ENCODE measurements at regions of chr9 and their contacts with region 1.

Region 1: DNA sequence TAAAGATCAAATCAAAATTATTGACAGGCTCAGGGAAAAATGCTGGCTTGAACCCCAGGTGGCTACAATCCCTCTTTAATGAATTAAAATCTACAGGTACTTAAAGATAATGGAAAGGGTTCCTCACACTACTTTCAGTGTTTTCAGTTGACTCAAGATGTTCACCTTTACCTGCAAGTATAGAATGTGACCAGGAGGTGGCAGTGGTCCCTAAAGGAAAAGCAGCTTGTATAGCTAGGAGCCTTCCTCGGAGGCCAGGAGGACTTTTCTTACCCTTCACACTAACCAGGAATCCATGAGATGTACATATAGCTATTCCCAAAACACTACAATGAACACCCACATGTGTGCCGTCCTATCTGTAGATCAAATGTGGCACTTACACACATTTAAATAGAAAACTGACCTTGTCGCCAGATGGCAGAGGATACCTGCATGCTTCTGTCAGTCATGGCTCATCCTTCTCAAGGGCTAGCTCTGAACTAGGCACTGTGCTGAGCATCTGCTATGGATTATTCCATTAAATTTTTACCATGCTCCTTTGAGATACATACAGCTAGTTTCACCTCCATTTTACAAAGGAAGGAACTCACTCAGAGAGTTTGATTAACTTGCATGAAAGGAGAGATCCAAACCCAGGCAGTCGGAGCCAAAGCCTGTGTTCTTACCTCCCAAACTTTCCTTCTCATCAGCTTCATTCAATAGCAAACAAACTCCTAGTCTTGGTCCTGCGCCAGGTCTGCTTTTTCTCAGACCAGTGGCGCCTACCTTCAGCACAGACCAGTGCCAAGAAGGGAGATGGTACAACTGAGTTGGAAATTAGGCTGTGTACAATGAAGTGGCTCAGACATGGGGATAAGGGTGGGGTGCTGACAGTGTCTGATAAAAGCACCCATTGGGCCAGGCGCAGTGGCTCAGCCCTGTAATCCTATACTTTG is 24.5 kb downstream of the C9orf152 start:
- DNase-seq: peak; percentile 78
- H3K4me3 ChIP-seq: no peak overlapping the region
- H3K27ac ChIP-seq: no peak overlapping the region
- H3K4me1 ChIP-seq: no peaks in the 10 kb centered on the region
- H3K27me3 ChIP-seq: no peaks in the 10 kb centered on the region
- CTCF ChIP-seq: peak; percentile 75

Region 2: GRCh38 chr9:110125207-110125751 is 58.2 kb before region 1 on chr9:
- CTCF ChIA-PET with region 1: no interaction called
- POLR2A ChIA-PET with region 1: no interaction called
- intact Hi-C with region 1: no loop called
- DNase-seq: no peak
- H3K4me3 ChIP-seq: no peak overlapping the region
- H3K27ac ChIP-seq: no peak overlapping the region
- H3K4me1 ChIP-seq: no peaks in the 10 kb centered on the region
- H3K27me3 ChIP-seq: no peaks in the 10 kb centered on the region
- CTCF ChIP-seq: no peak

Region 3: GRCh38 chr9:110217656-110218099 is 34.2 kb after region 1 on chr9:
- CTCF ChIA-PET with region 1: interaction called, 3 read pairs
- POLR2A ChIA-PET with region 1: no interaction called
- intact Hi-C with region 1: loop called (anchors 5 kb)
- DNase-seq: peak; percentile 38
- H3K4me3 ChIP-seq: no peak overlapping the region
- H3K27ac ChIP-seq: no peak overlapping the region
- H3K4me1 ChIP-seq: no peaks in the 10 kb centered on the region
- H3K27me3 ChIP-seq: peaks cover 4% of the 10 kb centered on the region
- CTCF ChIP-seq: peak; percentile 78

Region 4: GRCh38 chr9:110427497-110428104 is 244.1 kb after region 1 on chr9:
- CTCF ChIA-PET with region 1: no interaction called
- POLR2A ChIA-PET with region 1: no interaction called
- intact Hi-C with region 1: loop called (anchors 2 kb)
- DNase-seq: peak; percentile 60
- H3K4me3 ChIP-seq: no peak overlapping the region
- H3K27ac ChIP-seq: no peak overlapping the region
- H3K4me1 ChIP-seq: no peaks in the 10 kb centered on the region
- H3K27me3 ChIP-seq: no peaks in the 10 kb centered on the region
- CTCF ChIP-seq: peak; percentile 88

Region 5: GRCh38 chr9:110623462-110624025 is 440.1 kb after region 1 on chr9:
- CTCF ChIA-PET with region 1: interaction called, 12 read pairs
- POLR2A ChIA-PET with region 1: no interaction called
- intact Hi-C with region 1: loop called (anchors 2 kb)
- DNase-seq: peak; percentile 69
- H3K4me3 ChIP-seq: no peak overlapping the region
- H3K27ac ChIP-seq: no peak overlapping the region
- H3K4me1 ChIP-seq: peaks cover 11% of the 10 kb centered on the region
- H3K27me3 ChIP-seq: no peaks in the 10 kb centered on the region
- CTCF ChIP-seq: peak; percentile 74

Region 6: DNA sequence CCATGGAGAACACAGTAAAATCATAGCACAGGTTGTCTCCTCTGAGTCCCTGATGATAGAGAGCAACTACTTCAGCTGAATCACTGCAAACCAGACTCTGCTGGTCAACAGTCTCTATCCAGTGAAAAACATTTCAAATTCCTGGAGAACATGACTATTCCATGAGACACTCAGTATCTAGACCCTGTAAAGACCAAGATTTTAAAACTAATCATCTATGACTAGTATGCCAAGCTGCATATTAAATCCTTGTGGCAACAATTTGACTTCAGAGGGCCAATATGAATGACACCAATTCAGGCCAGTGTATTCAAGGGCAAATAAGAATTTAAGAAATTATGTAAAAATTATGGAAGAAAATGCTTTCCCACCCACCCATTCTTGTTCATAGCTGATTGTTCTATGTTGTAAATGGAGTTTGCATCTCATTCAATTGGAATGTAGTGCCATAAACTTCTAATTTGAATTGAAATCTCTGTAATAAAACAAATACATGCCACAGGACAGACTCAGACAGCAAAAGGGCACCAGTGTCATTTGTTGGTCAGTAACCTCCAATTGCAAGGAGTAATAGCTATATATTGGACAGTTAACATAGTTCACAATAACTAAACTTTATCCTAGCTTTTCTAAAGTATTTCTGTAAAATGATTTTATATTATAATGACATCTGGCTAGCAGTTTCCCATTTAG is 934.9 kb after region 1 on chr9:
- CTCF ChIA-PET with region 1: no interaction called
- POLR2A ChIA-PET with region 1: no interaction called
- intact Hi-C with region 1: no loop called
- DNase-seq: no peak
- H3K4me3 ChIP-seq: no peak overlapping the region
- H3K27ac ChIP-seq: no peak overlapping the region
- H3K4me1 ChIP-seq: no peaks in the 10 kb centered on the region
- H3K27me3 ChIP-seq: no peaks in the 10 kb centered on the region
- CTCF ChIP-seq: no peak

Region 7: DNA sequence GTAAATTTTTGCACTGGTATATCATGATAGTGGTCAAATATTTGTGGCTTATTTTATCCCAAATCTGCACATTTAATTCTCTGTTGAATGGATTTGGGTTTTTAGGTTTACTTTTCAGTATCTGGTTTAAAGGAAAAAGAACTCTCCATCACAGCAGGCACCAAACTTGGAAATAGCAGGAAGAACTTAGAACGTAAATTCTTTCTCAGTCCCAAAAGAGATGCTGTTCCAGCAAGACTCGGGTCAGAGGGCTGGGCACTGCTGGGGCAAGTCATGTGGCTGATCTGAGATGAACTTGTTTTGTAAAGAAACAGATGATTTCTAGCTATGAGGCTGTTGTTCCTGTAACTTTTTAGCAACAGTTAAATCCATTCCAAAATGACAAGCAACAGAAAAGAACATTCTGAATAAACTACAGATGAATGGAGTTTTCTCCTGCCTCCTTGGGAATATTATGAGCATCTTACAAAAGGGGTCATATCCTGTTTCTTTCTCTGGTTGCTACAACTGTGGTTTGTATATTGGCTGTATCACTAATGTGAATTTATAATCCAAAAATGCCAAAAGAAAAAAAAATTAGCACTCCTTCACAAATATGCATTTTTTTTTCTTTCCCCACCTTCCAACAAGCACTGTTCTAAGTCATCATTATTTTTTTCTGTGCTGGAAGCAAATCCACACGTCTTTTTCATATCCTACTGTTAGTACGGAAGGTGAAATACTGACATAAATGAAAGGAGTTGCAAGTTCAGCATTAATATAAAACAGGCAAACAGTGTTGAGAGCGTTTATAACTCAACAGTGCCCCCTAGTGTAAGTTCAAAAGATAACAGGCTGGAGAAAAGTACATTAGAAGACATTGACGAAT is 1115.5 kb after region 1 on chr9:
- CTCF ChIA-PET with region 1: no interaction called
- POLR2A ChIA-PET with region 1: no interaction called
- intact Hi-C with region 1: loop called (anchors 5 kb)
- DNase-seq: peak; percentile 76
- H3K4me3 ChIP-seq: peak overlapping the region; percentile 13
- H3K27ac ChIP-seq: peak overlapping the region; percentile 10
- H3K4me1 ChIP-seq: peaks cover 9% of the 10 kb centered on the region
- H3K27me3 ChIP-seq: no peaks in the 10 kb centered on the region
- CTCF ChIP-seq: peak; percentile 79